Activated T-helper 2 cell treated with anti-CD3 and anti-CD28 coated beads, Interferon-gamma antibody, Interleukin-2, Interleukin-4, amounts not matched to agents 10 μg/mL and 5 μg/mL and 100 μg/mL, durations not matched to agents 14 hours and 24 hours and 36 hours (primary cell): ENCODE measurements at regions of chr22 and their contacts with region 1.

Region 1: DNA sequence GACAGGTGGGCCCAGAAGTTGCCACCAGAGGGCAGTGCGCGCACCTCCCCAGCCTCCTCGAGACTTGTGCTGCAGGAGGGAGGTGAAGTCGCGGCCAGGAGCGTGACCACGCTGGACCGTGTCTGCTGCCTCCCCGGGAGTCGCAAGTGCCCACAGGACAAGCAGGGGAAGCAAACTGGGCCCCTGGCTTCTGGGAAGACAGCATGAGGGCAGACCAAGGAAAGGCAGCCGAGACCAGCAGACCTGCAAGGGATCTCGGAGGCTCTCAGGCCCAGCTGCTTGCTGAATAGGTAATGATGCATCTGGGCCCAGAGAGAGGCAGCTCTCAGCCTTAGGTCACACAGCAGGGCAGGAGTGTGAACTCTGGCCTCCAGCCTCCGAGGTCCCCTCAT is 17.0 kb upstream of the IL2RB start:
- DNase-seq: peak; percentile 75
- H3K4me3 Mint-ChIP-seq: peak overlapping the region; percentile 68
- H3K27ac Mint-ChIP-seq: peak overlapping the region; percentile 79
- H3K4me1 Mint-ChIP-seq: peaks cover 64% of the 10 kb centered on the region
- H3K27me3 Mint-ChIP-seq: no peaks in the 10 kb centered on the region

Region 2: DNA sequence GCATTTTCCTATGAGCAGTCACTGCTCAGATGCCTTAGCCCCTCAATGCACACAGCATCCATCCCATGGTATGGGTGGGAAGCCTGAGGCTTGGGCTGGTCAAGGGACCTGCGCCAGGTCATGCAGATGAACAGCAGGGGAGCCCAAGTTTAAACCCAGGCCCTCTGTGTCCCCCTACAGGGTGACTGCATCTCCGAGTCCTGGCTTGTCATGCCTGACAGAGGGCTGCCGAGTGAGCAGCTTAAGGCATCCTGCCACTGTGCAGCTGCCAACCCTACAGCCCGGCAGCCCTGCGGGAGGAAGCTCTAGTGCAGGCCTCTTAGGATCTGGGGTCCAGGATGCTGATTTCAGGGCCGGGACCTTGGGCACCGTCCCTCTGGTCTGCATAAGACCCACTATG is 26.9 kb before region 1 on chr22:
- intact Hi-C with region 1: loop called (anchors 1 kb)
- DNase-seq: no peak
- H3K4me3 Mint-ChIP-seq: no peak overlapping the region
- H3K27ac Mint-ChIP-seq: peak overlapping the region; percentile 97
- H3K4me1 Mint-ChIP-seq: peaks cover 49% of the 10 kb centered on the region
- H3K27me3 Mint-ChIP-seq: no peaks in the 10 kb centered on the region

Region 3: GRCh38 chr22:37148742-37149665 is 17.7 kb before region 1 on chr22:
- intact Hi-C with region 1: loop called (anchors 1 kb)
- DNase-seq: no peak
- H3K4me3 Mint-ChIP-seq: peak overlapping the region; percentile 92
- H3K27ac Mint-ChIP-seq: peak overlapping the region; percentile 94
- H3K4me1 Mint-ChIP-seq: peaks cover 46% of the 10 kb centered on the region
- H3K27me3 Mint-ChIP-seq: no peaks in the 10 kb centered on the region